Activated CD4-positive, alpha-beta memory T cell treated with anti-CD3 and anti-CD28 coated beads for 36 hours (primary cell): ENCODE measurements at regions of chr17 and their contacts with region 1.

Region 1: GRCh38 chr17:77999413-78000173 is 41.1 kb downstream of the TNRC6C start:
- DNase-seq: peak; percentile 45
- H3K4me3 Mint-ChIP-seq: no peak overlapping the region
- H3K27ac Mint-ChIP-seq: no peak overlapping the region
- H3K4me1 Mint-ChIP-seq: peaks cover 67% of the 10 kb centered on the region
- H3K27me3 Mint-ChIP-seq: no peaks in the 10 kb centered on the region

Region 2: DNA sequence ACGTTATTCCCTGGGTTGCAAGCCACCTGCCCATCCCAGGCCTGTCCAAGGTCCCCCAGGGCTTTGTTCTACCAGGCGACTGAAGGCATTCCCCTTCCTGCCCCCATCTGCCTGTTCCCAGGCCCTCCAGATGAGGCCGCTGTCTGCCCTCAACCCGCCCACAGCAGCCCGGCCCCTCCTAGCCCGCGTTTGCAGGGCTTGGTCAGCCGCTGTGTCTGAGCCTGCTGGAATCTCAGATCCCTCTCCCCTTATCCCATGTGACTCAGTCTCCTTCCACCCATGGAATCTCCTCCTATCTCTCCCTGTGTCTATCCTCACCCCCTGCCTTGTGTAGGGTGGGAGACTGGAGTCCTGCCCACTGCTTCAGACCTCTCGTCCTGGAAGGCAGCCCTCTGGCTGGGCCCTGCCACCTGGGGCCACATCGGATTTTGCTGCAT is 227.1 kb before region 1 on chr17:
- CTCF ChIA-PET with region 1: no interaction called
- POLR2A ChIA-PET with region 1: no interaction called
- intact Hi-C with region 1: no loop called
- DNase-seq: peak; percentile 81
- H3K4me3 Mint-ChIP-seq: no peak overlapping the region
- H3K27ac Mint-ChIP-seq: no peak overlapping the region
- H3K4me1 Mint-ChIP-seq: peaks cover 9% of the 10 kb centered on the region
- H3K27me3 Mint-ChIP-seq: no peaks in the 10 kb centered on the region

Region 3: DNA sequence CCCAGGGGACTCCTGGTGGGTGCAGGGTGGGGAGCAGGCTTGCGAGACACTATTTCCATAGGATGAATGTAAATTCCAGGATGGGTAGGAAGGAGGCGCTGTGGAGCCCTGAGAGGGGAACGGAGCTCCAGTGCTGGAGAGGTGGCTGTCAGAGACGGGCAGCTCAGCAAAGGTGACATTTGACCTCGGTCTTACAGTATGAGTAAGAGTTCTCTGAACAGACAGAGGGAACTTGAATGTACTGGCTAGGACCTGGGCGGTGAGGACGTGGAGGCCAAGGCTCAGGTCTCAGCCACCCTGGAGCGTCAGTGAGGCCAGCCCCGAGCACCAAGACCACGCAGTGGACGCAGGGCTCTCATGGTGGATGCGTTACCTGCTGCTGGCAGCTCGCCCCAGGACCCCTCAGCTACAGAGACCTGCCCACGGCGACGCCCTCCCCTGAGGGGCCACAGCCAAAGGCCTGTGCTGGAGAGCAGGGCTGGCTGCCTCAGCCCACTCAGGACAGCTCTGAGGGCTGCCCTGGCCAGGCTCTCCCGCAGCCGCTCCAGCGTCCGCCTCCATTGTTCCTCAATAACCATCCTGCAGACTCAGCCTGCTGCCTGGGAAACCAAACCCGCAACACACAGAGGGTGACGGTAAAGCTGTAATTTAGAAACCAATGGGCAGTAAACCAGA is 107.0 kb before region 1 on chr17:
- CTCF ChIA-PET with region 1: no interaction called
- POLR2A ChIA-PET with region 1: no interaction called
- intact Hi-C with region 1: no loop called
- DNase-seq: peak; percentile 29
- H3K4me3 Mint-ChIP-seq: no peak overlapping the region
- H3K27ac Mint-ChIP-seq: no peak overlapping the region
- H3K4me1 Mint-ChIP-seq: peaks cover 6% of the 10 kb centered on the region
- H3K27me3 Mint-ChIP-seq: peaks cover 3% of the 10 kb centered on the region

Region 4: DNA sequence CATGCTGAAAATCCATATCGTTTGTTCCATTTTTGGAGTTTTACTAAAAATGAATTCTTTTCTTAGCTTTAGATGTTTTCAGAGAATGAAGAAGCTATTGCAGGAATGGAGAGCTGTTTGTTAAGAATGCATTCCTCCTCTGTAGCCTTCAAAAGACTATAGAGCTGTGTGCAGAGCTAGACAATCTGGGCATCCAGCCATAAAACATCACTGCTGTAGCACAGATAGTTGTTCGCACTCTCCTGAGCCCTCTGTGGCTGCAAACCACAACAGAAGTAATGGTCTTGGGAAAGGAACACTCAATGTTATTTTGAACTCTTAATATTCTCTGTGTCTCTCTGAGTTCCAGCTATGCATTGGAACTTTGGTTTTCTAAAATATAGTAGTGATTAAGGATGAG is 36.2 kb before region 1 on chr17:
- CTCF ChIA-PET with region 1: no interaction called
- POLR2A ChIA-PET with region 1: interaction called, 5 read pairs
- intact Hi-C with region 1: loop called (anchors 5 kb)
- DNase-seq: peak; percentile 34
- H3K4me3 Mint-ChIP-seq: peak overlapping the region; percentile 4
- H3K27ac Mint-ChIP-seq: no peak overlapping the region
- H3K4me1 Mint-ChIP-seq: peaks cover 63% of the 10 kb centered on the region
- H3K27me3 Mint-ChIP-seq: no peaks in the 10 kb centered on the region

Region 5: GRCh38 chr17:78044280-78044835 is 44.8 kb after region 1 on chr17:
- CTCF ChIA-PET with region 1: no interaction called
- POLR2A ChIA-PET with region 1: no interaction called
- intact Hi-C with region 1: no loop called
- DNase-seq: no peak
- H3K4me3 Mint-ChIP-seq: no peak overlapping the region
- H3K27ac Mint-ChIP-seq: no peak overlapping the region
- H3K4me1 Mint-ChIP-seq: peaks cover 28% of the 10 kb centered on the region
- H3K27me3 Mint-ChIP-seq: no peaks in the 10 kb centered on the region

Region 6: GRCh38 chr17:78082988-78083387 is 83.4 kb after region 1 on chr17:
- CTCF ChIA-PET with region 1: no interaction called
- POLR2A ChIA-PET with region 1: no interaction called
- intact Hi-C with region 1: no loop called
- DNase-seq: no peak
- H3K4me3 Mint-ChIP-seq: no peak overlapping the region
- H3K27ac Mint-ChIP-seq: no peak overlapping the region
- H3K4me1 Mint-ChIP-seq: no peaks in the 10 kb centered on the region
- H3K27me3 Mint-ChIP-seq: no peaks in the 10 kb centered on the region